ENCODE measurements at regions of chr3 and their contacts with region 1.

Region 1: GRCh38 chr3:62188681-62189383 is 184.5 kb downstream of the FEZF2 start:
- DNase-seq: peak; percentile 79 to 82
- H3K4me3 ChIP-seq: no peak overlapping the region
- H3K4me1 ChIP-seq: no peaks in the 10 kb centered on the region
- H3K27me3 ChIP-seq: no peaks in the 10 kb centered on the region

Region 2: GRCh38 chr3:61417352-61417751 is 771.5 kb before region 1 on chr3:
- in situ Hi-C with region 1: loop called (anchors 25 kb)
- DNase-seq: no peak
- H3K4me3 ChIP-seq: no peak overlapping the region
- H3K4me1 ChIP-seq: peaks cover 9% of the 10 kb centered on the region
- H3K27me3 ChIP-seq: no peaks in the 10 kb centered on the region

Region 3: DNA sequence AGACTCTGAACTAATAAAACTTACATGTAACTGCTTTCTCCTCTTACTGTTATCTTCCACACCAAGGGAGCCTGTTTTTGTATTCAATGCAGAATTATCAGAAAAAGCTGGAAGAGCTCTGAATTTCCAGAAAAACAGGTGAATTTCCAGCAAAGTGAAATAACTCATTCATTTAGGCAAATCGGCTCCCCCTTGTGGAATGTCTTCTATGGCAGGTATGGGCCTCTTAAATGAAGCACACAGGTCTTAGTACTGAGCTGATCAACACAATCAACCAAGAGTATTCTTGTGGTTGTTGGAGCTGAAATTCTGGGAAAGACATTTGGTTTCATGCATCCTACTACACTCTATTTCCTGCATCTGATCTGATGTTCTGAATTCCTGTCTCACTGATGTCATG is 658.5 kb before region 1 on chr3:
- in situ Hi-C with region 1: loop called (anchors 25 kb)
- DNase-seq: peak; percentile 36 to 61
- H3K4me3 ChIP-seq: no peak overlapping the region
- H3K4me1 ChIP-seq: no peaks in the 10 kb centered on the region
- H3K27me3 ChIP-seq: no peaks in the 10 kb centered on the region

Region 4: GRCh38 chr3:61682671-61683548 is 505.9 kb before region 1 on chr3:
- in situ Hi-C with region 1: loop called (anchors 25 kb)
- DNase-seq: peak; percentile 80 to 98
- H3K4me3 ChIP-seq: no peak overlapping the region
- H3K4me1 ChIP-seq: peaks cover 39% of the 10 kb centered on the region
- H3K27me3 ChIP-seq: peaks cover 6% of the 10 kb centered on the region; the same call in 1 of the 2 replicates

Region 5: DNA sequence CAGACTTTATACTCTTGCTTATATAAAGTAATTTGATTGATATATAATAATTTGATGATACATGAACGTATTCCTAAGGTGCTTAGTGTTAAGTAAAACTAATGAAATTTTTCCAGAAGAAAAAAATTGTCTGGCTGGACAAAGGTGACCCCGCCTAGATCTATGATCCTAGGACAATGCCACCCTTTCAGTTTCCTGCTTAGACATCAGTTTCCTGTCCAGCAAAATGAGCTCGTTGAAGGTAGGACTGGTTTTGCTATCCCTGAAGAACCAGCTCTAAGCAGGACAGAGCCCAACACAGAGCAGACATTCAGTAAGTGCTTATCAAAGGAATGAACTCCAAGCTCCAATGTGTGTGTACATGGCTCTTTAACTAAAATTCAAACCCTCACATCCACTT is 1382.8 kb after region 1 on chr3:
- in situ Hi-C with region 1: no loop called
- DNase-seq: no peak
- H3K4me3 ChIP-seq: no peak overlapping the region
- H3K4me1 ChIP-seq: no peaks in the 10 kb centered on the region
- H3K27me3 ChIP-seq: peaks cover 4% of the 10 kb centered on the region; the same call in 1 of the 2 replicates

Measured in HAP-1 (cell line).